Right ventricle myocardium superior (tissue), 1 donor: ENCODE measurements at regions of chr7 and their contacts with region 1.

Region 1: DNA sequence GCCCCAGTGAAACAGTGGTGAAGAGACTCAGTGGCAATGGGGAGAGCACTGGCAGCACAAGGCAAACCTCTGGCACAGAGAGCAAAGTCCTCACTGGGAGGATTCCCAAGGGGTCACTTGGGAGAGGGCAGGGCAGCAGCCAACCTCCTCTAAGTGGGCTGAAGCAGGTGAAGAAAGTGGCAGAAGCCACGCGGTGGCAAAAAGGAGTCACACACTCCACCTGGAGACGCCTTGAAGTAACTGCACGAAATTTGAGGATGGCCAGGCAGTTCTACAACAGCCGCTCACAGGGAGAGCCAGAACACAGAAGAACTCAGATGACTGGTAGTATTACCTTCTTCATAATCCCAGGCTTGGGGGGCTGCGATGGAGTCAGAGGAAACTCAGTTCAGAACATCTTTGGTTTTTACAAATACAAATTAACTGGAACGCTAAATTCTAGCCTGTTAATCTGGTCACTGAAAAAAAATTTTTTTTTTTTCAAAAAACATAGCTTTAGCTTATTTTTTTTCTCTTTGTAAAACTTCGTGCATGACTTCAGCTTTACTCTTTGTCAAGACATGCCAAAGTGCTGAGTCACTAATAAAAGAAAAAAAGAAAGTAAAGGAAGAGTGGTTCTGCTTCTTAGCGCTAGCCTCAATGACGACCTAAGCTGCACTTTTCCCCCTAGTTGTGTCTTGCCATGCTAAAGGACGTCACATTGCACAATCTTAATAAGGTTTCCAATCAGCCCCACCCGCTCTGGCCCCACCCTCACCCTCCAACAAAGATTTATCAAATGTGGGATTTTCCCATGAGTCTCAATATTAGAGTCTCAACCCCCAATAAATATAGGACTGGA is 435 bp upstream of the IL6 start:
- DNase-seq: peak; percentile 44
- ATAC-seq: peak; percentile 54

Region 2: DNA sequence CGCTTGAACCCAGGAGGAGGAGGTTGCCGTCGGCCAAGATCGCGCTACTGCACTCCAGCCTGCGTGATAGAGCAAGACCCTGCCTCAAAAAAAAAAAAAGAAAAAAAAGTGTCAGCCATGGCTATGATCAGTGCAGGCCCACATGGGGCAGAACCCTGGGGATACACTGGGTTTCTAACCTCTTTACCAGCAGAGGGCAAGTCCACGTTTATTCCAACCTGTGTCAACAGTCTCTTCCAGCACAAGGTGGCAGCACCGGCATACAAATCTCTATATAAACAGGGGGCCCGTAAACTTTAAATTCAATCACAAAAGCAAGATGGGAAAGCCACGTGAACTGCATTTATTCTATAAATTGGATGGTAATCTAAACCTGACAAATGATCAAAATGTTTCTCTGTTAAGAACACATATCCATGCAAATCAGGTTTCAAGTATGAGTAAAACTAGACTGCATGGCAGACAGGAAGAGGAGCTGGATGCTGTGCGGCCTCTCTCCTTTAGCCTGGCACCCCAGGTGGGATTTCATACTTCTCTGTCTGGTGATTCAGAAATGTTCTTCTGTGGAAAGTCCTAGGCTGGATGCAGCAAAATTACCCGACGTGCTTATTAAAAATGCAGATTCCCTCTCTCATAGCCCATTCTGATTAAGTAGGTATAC is 166.6 kb before region 1 on chr7:
- intact Hi-C with region 1: loop called (anchors 2 kb)
- DNase-seq: peak; percentile 71
- ATAC-seq: peak; percentile 79

Region 3: DNA sequence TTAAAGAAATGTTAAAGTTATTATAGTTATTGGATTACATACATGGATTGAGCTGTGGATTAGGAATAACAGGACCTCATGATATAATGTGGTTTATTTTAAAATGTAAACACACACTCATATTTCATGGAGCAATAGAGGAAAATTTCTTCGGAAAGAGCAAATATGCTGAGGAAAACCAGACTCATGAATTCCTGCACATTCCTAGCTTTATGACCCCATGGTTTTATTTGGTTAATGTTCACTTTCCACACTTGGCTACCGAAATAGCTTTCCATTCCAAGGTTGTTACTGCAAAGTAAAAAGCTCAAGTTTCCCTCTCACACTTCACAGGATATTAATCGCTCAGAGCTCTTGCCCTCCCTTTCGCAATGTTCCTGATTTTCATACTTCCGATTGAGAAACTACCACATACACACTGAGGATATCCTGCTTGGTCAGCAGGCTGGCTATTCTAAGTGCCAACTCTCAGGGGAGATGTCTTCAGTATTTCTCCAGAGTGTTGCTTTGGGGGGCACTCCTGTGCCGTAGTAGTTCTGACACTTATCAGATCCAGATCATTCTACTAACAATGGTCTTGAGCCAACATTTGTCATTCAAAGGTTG is 149.1 kb before region 1 on chr7:
- intact Hi-C with region 1: loop called (anchors 5 kb)
- DNase-seq: no peak
- ATAC-seq: peak; percentile 93

Region 4: GRCh38 chr7:23306936-23307521 is 580.5 kb after region 1 on chr7:
- intact Hi-C with region 1: no loop called
- DNase-seq: no peak
- ATAC-seq: no peak